Activated CD4-positive, alpha-beta T cell treated with anti-CD3 and anti-CD28 coated beads for 36 hours (primary cell): ENCODE measurements at regions of chr12 and their contacts with region 1.

Region 1: DNA sequence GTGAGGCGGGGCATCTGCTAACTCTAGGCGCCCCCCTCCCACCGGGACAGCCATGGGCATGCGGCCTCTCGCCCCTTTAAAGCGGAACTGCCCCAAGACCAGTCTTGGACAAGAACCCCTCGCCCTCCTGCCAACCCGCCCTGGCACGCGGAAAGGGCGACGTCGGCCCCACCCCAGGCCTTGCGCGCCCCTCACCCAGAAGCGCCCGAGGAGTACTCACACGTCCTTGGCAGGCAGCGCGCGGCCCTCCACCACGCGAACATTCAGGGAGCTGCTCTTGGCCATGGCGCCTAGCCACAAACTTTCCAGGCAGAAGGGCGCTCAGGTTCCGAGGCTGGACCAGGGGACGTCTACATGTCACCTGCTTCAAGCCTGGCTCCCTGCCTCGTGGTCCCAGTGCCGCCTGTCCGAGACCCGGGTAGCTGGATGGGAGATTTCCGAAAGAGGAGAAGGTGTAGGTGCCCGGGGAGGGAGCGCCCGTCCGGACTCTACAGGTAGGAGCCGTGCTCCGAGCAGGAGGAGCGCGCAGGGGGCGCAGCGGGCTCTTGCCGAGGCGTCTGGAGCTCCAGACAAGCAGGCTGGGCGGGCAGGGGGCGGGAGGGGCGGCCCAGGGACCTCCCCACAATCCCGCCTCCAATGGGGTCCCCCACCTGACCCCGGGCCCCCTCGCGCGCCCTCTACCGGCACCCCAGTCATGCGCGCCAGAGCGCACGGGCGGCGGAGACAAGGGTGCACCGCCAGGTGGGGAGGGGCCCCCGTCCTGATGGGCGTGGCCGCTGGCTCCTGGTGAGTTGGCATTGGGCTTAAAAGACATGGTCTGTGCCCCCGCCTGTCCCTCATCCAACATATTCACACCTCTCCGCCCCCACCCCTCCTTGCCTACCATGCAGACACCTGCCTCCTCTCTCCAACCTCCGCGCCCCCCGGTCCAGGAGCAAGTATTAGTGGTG is at the start of gene RASAL1:
- DNase-seq: peak; percentile 96
- ATAC-seq: peak; percentile 92
- H3K4me3 Mint-ChIP-seq: peak within 1 kb of the TSS; percentile 73
- H3K27ac Mint-ChIP-seq: peak within 1 kb of the TSS; percentile 92
- H3K4me1 Mint-ChIP-seq: peaks cover 16% of the 10 kb centered on the region
- H3K27me3 Mint-ChIP-seq: no peaks in the 10 kb centered on the region
- total RNA-seq, gene RASAL1: 9.0 to 10.6 TPM

Region 2: DNA sequence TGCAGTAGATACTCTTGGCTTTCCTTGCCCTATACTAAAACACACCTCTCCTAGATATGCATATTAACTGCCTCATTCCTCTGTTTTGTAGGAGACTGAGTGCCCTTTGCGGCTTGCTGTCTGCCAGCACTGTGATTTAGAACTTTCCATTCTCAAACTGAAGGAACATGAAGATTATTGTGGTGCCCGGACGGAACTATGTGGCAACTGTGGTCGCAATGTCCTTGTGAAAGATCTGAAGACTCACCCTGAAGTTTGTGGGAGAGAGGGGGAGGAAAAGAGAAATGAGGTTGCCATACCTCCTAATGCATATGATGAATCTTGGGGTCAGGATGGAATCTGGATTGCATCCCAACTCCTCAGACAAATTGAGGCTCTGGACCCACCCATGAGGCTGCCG is 994.7 kb before region 1 on chr12:
- CTCF ChIA-PET with region 1: no interaction called
- POLR2A ChIA-PET with region 1: no interaction called
- intact Hi-C with region 1: no loop called
- DNase-seq: no peak
- ATAC-seq: no peak
- H3K4me3 Mint-ChIP-seq: no peak overlapping the region
- H3K27ac Mint-ChIP-seq: peak overlapping the region; percentile 7
- H3K4me1 Mint-ChIP-seq: no peaks in the 10 kb centered on the region
- H3K27me3 Mint-ChIP-seq: no peaks in the 10 kb centered on the region

Region 3: GRCh38 chr12:112750971-112751370 is 384.5 kb before region 1 on chr12:
- CTCF ChIA-PET with region 1: no interaction called
- POLR2A ChIA-PET with region 1: no interaction called
- intact Hi-C with region 1: no loop called
- DNase-seq: no peak
- ATAC-seq: no peak
- H3K4me3 Mint-ChIP-seq: no peak overlapping the region
- H3K27ac Mint-ChIP-seq: no peak overlapping the region
- H3K4me1 Mint-ChIP-seq: peaks cover 9% of the 10 kb centered on the region
- H3K27me3 Mint-ChIP-seq: peaks cover 24% of the 10 kb centered on the region

Region 4: GRCh38 chr12:113103756-113104450 is 31.6 kb before region 1 on chr12:
- CTCF ChIA-PET with region 1: interaction called, 4 read pairs
- POLR2A ChIA-PET with region 1: no interaction called
- intact Hi-C with region 1: loop called in 1 of 2 experiments (anchors 1 kb)
- DNase-seq: peak; percentile 86
- ATAC-seq: peak; percentile 98
- H3K4me3 Mint-ChIP-seq: peak overlapping the region; percentile 62
- H3K27ac Mint-ChIP-seq: peak overlapping the region; percentile 67
- H3K4me1 Mint-ChIP-seq: peaks cover 9% of the 10 kb centered on the region
- H3K27me3 Mint-ChIP-seq: no peaks in the 10 kb centered on the region

Region 5: GRCh38 chr12:113194971-113195391 is 59.5 kb after region 1 on chr12:
- CTCF ChIA-PET with region 1: no interaction called
- POLR2A ChIA-PET with region 1: no interaction called
- intact Hi-C with region 1: no loop called
- DNase-seq: no peak
- ATAC-seq: no peak
- H3K4me3 Mint-ChIP-seq: no peak overlapping the region
- H3K27ac Mint-ChIP-seq: no peak overlapping the region
- H3K4me1 Mint-ChIP-seq: peaks cover 2% of the 10 kb centered on the region
- H3K27me3 Mint-ChIP-seq: no peaks in the 10 kb centered on the region